GM10248 (cell line): ENCODE measurements at regions of chr7 and their contacts with region 1.

Region 1: DNA sequence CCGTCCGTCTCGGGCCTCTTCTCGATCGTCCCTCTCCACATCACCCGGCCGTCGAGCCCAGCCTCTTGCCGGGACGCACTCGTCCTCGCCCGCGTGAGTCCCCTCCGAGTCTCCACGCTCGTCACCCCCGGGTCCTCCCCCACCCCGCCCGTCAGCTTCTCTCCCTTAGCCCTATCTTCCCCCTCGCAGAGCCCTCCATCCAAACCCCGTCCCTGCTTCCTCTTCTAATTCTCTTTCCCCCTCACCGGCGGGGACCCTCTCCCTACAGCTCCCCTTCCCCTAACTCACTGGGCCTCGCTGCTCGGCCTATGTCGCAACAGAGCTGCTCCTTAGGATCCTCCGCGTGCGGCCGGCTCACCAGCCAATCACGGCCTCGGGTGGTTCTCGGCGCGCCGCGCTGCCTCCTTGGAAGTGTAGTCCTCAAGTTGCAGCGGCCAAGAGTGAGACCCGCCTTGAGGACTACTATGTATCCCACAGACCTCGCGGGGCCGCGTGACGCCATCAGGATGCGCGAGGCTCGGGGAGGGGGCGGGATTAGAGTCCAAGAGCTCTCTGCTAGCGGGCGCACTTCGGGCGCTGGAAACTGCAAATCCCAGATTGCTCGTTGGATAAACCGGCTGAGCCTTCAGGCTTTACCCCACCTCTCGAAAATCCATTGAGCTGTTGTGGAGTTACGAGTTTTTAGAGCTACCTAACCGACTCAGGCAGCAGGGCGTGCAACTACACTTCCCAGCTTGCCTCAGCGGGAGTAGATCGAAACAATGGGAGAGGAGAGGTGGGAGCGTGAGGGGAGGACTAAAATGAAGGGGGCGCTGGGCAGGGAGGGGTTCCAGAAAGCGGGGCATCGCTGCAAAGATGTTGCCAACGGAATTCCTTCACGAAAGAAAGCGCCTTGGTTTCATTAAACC is at the start of gene ABCF2:
- DNase-seq: peak; percentile 98
- CTCF ChIP-seq: no peak

Region 2: GRCh38 chr7:151237244-151238189 is 10.4 kb after region 1 on chr7:
- CTCF ChIA-PET with region 1: interaction called, 78 read pairs
- POLR2A ChIA-PET with region 1: interaction called, 13 read pairs
- DNase-seq: no peak
- CTCF ChIP-seq: no peak

Region 3: GRCh38 chr7:151254316-151254715 is 27.2 kb after region 1 on chr7:
- CTCF ChIA-PET with region 1: no interaction called
- POLR2A ChIA-PET with region 1: no interaction called
- DNase-seq: no peak
- CTCF ChIP-seq: no peak